PC-9 (cell line): ENCODE measurements at regions of chr10 and their contacts with region 1.

Region 1: GRCh38 chr10:110354322-110354766 is 49.6 kb upstream of the SMNDC1 start:
- DNase-seq: peak; percentile 61 to 62
- H3K4me3 ChIP-seq: no peak overlapping the region; the same call in 1 of the 2 replicates
- H3K27ac ChIP-seq: peak overlapping the region; percentile 95
- H3K4me1 ChIP-seq: peaks cover 70% of the 10 kb centered on the region
- H3K27me3 ChIP-seq: no peaks in the 10 kb centered on the region
- CTCF ChIP-seq: peak; percentile 71

Region 2: GRCh38 chr10:110311357-110311949 is 42.9 kb before region 1 on chr10:
- CTCF ChIA-PET with region 1: no interaction called
- POLR2A ChIA-PET with region 1: no interaction called
- intact Hi-C with region 1: loop called (anchors 1 kb)
- DNase-seq: peak; percentile 23 to 47
- H3K4me3 ChIP-seq: no peak overlapping the region
- H3K27ac ChIP-seq: peak overlapping the region; percentile 45
- H3K4me1 ChIP-seq: peaks cover 27% of the 10 kb centered on the region
- H3K27me3 ChIP-seq: no peaks in the 10 kb centered on the region
- CTCF ChIP-seq: peak; percentile 76

Region 3: DNA sequence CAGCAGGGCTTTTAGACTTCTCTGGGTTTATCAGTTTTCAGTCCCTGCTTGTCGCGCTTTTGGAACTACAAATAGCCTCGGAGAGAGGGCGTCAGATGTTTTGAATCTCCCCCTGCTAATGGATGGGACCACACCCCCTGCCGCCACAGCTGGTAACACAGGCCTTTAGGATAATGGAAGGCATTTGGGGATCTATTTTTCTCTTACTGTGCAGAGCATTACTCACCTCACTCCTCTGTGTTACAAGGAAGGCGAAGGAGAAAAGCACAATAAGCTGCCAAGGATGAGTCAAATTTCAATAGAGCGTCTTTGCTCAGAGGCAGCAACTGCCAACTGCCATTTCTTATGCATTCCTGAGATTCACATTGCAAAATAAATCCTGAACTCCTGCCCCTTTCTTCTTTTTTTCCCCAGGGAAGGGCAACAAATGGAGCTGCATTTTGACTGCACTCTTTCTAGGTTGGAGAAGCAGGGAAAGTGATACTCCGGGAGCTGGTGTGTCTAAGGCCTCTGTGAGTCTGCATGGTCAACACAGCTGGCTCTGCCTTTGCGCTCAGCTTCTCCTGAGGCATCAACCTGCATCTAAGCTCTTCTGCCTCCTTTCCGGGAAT is 18.1 kb before region 1 on chr10:
- CTCF ChIA-PET with region 1: interaction called, 25 read pairs
- POLR2A ChIA-PET with region 1: no interaction called
- intact Hi-C with region 1: no loop called
- DNase-seq: peak in 1 of 2 experiments; percentile 92
- H3K4me3 ChIP-seq: no peak overlapping the region
- H3K27ac ChIP-seq: peak overlapping the region; percentile 84
- H3K4me1 ChIP-seq: peaks cover 24% of the 10 kb centered on the region
- H3K27me3 ChIP-seq: no peaks in the 10 kb centered on the region
- CTCF ChIP-seq: 0 out of 2 replicates have a peak, but pooled peaks have one; percentile 29

Region 4: DNA sequence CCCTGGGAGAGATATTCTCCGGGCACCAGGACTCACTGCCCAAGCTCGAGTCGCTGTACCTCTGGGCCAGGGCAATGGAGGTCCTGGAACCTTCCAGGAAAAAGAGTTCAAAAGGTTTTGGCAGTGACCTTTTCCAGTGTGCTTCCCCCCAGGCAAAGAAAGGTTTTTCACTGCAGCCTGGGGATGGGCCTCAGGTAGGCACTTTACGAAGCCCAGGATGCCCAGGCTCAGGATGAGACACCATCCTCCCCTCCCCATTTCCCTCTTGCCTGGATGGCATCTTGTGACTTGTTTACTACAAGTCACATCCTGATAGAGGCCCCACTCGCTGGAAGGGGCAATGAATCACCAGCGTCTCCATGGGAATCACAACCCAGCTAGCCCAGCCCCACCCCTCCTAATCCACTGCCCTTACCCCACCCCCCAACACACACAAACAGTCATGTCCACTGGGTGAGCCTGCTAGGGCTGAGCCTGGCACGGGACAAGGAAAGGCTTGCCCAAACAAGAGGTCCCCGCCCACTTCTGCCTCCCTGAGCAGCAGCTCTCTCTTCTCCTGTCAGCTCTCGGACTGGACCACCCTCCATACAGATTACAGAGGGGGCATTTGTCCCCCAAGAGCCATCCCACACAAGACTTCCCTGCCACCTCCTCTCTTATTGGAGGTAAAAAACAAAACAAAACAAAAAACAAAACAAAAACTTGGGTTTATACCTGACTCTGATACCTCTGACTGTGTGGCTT is 44.2 kb after region 1 on chr10:
- CTCF ChIA-PET with region 1: interaction called, 4 read pairs
- POLR2A ChIA-PET with region 1: interaction called, 9 read pairs
- intact Hi-C with region 1: loop called (anchors 1 kb)
- DNase-seq: peak; percentile 88 to 94
- H3K4me3 ChIP-seq: peak overlapping the region; percentile 41; the same call in 1 of the 2 replicates
- H3K27ac ChIP-seq: peak overlapping the region; percentile 100
- H3K4me1 ChIP-seq: peaks cover 71% of the 10 kb centered on the region
- H3K27me3 ChIP-seq: no peaks in the 10 kb centered on the region
- CTCF ChIP-seq: no peak

Region 5: GRCh38 chr10:110408203-110408751 is 53.9 kb after region 1 on chr10:
- CTCF ChIA-PET with region 1: interaction called, 3 read pairs
- POLR2A ChIA-PET with region 1: no interaction called
- intact Hi-C with region 1: loop called (anchors 1 kb)
- DNase-seq: peak; percentile 81 to 94
- H3K4me3 ChIP-seq: peak overlapping the region; percentile 2; the same call in 1 of the 2 replicates
- H3K27ac ChIP-seq: peak overlapping the region; percentile 100
- H3K4me1 ChIP-seq: peaks cover 69% of the 10 kb centered on the region
- H3K27me3 ChIP-seq: no peaks in the 10 kb centered on the region
- CTCF ChIP-seq: no peak

Region 6: GRCh38 chr10:110460111-110460809 is 105.9 kb after region 1 on chr10:
- CTCF ChIA-PET with region 1: interaction called, 3 read pairs
- POLR2A ChIA-PET with region 1: no interaction called
- intact Hi-C with region 1: loop called (anchors 1 kb)
- DNase-seq: peak; percentile 69 to 90
- H3K4me3 ChIP-seq: peak overlapping the region; percentile 32; the same call in 1 of the 2 replicates
- H3K27ac ChIP-seq: peak overlapping the region; percentile 87
- H3K4me1 ChIP-seq: peaks cover 66% of the 10 kb centered on the region
- H3K27me3 ChIP-seq: no peaks in the 10 kb centered on the region
- CTCF ChIP-seq: no peak

Region 7: DNA sequence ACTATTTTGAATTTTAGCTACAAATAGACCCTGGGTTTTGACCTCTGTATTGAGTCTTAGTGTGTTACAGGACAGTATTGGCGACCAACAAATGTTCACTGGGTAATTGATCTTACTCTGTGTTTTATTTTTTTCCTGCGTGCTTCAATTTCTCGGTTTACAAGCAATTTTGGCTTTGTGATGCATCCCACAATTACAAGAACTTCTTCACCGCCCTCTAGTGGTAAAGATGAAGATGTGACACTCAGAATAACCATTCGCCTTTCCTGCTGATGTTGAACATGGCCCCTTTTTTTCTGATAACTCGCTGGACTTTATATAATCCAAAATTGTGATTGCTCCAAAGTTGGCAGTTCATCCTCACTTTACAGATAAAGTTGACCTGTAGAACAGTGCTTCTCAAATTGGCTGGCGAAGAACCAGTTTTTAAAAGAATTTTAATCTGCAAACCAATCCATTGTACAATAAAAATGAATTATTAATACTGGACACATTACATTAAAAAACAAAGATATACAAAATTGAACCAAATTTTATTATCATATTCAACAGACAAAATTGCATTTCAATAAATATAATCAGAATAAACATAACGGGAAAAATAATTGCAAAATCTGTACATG is 192.9 kb after region 1 on chr10:
- CTCF ChIA-PET with region 1: no interaction called
- POLR2A ChIA-PET with region 1: no interaction called
- intact Hi-C with region 1: loop called (anchors 1 kb)
- DNase-seq: no peak
- H3K4me3 ChIP-seq: no peak overlapping the region
- H3K27ac ChIP-seq: no peak overlapping the region
- H3K4me1 ChIP-seq: no peaks in the 10 kb centered on the region
- H3K27me3 ChIP-seq: no peaks in the 10 kb centered on the region
- CTCF ChIP-seq: peak; percentile 83